ENCODE measurements at regions of chr2 and their contacts with region 1.

Region 1: GRCh38 chr2:121356058-121356640 is 71.1 kb upstream of the TFCP2L1 start:
- DNase-seq: no peak
- H3K4me3 Mint-ChIP-seq: no peak overlapping the region
- H3K27ac Mint-ChIP-seq: no peak overlapping the region
- H3K4me1 Mint-ChIP-seq: peaks cover 8% of the 10 kb centered on the region
- H3K27me3 Mint-ChIP-seq: no peaks in the 10 kb centered on the region

Region 2: GRCh38 chr2:121088251-121089165 is 267.6 kb before region 1 on chr2:
- intact Hi-C with region 1: loop called (anchors 5 kb)
- DNase-seq: no peak
- H3K4me3 Mint-ChIP-seq: no peak overlapping the region
- H3K27ac Mint-ChIP-seq: no peak overlapping the region
- H3K4me1 Mint-ChIP-seq: no peaks in the 10 kb centered on the region
- H3K27me3 Mint-ChIP-seq: peaks cover 1% of the 10 kb centered on the region

Region 3: DNA sequence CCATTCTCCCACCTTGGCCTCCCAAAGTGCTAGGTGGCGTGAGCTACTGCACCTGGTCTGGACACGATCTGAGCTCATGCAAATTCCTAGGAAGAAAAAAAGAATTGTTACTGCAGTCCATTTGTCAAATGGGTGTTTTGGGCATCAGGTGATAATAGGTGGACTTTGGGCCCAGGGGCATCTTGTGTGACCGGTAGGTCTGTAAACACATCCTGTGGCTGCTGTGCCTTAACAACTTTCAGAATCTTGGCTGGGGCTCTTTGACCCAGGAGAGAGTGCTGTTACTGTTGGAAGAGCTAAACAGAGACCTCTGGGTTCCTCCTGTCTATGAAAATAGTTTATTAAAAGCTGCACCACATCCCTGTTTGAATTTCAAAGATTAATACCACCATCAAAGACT is 36.2 kb before region 1 on chr2:
- intact Hi-C with region 1: no loop called
- DNase-seq: no peak
- H3K4me3 Mint-ChIP-seq: no peak overlapping the region
- H3K27ac Mint-ChIP-seq: no peak overlapping the region
- H3K4me1 Mint-ChIP-seq: no peaks in the 10 kb centered on the region
- H3K27me3 Mint-ChIP-seq: no peaks in the 10 kb centered on the region

Measured in activated T-helper 2 cell treated with anti-CD3 and anti-CD28 coated beads, Interferon-gamma antibody, Interleukin-2, Interleukin-4, amounts not matched to agents 10 μg/mL and 5 μg/mL and 100 μg/mL, durations not matched to agents 14 hours and 24 hours and 36 hours (primary cell).